ENCODE measurements at regions of chr22 and their contacts with region 1.

Region 1: GRCh38 chr22:41448189-41448808 is 1.7 kb upstream of the TOB2 start:
- DNase-seq: peak; percentile 99
- ATAC-seq: peak; percentile 80
- H3K4me3 ChIP-seq: peak overlapping the region; percentile 93 to 94
- H3K27ac ChIP-seq: peak overlapping the region; percentile 100
- H3K4me1 ChIP-seq: peaks cover 5 to 29% of the 10 kb centered on the region in 2 experiments; a peak in 3 of 4 replicates
- H3K27me3 ChIP-seq: no peaks in the 10 kb centered on the region
- CTCF ChIP-seq: no peak
- POLR2A ChIP-seq: peak; percentile 37
- RAD21 ChIP-seq: no peak

Region 2: DNA sequence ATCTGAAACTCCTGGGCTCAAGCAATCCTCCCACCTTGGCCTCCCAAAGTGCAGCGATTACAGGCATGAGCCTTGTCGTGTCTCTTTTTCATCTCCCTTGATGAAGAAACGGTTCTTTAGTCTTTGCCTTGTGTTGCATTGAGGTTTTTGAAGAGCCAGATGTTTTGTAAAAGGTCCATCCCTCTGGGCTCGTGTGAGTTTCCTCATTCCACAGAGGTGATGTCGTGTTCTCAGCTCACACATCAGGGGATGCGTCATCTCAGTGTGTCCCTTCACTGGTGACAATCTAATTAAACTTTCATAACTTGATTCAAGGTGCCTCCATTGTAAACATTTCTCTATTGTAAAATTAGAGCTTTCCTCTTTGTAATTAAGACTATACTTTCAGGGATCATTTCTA is 96.2 kb before region 1 on chr22:
- CTCF ChIA-PET with region 1: no interaction called
- POLR2A ChIA-PET with region 1: no interaction called
- RAD21 ChIA-PET with region 1: no interaction called
- intact Hi-C with region 1: no loop called
- DNase-seq: peak; percentile 6
- ATAC-seq: peak; percentile 61
- H3K4me3 ChIP-seq: no peak overlapping the region
- H3K27ac ChIP-seq: peak overlapping the region; percentile 19; the same call in 1 of the 2 replicates
- H3K4me1 ChIP-seq: peaks cover 0 to 19% of the 10 kb centered on the region in 2 experiments; a peak in 2 of 4 replicates
- H3K27me3 ChIP-seq: no peaks in the 10 kb centered on the region
- CTCF ChIP-seq: no peak
- POLR2A ChIP-seq: no peak
- RAD21 ChIP-seq: no peak

Region 3: DNA sequence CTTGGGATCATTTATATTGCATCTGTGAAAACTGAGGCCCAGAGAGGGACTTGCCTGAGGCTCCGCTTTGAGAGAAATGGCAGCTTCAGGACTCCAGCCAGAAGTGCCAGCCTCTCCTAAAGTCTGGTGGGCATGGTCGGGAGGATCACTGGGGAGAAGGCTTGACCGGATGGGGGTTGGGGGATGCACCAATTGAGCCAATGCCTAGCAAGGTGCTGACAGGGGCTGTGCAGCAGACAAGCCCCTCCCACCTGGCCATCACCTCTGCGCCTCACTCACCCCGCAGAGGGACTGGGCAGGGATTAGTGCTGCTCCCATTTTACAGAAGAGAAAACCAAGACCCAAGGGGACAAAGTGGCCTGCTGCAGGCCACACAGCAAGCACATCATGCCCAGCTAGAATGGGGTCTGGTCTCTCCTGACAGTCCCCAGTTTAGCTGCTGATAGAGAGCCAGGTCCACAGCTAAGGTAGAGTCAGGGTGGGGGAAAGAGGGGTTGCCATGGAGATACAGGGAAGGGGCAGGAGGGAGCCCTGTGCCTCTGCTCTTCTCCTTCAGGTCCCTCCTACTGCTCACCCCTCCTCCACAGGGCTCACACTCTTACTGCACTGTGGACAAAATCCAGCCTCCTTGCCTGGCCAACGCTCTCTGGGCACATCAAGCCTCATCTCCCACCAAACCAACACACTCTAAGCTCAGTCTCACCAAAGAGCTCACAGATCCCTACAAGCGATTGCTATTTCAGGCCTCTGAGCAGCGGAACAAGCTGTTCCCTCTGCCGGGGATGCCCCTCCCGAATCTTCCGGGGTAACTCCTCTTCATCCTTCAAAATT is 37.1 kb before region 1 on chr22:
- CTCF ChIA-PET with region 1: no interaction called
- POLR2A ChIA-PET with region 1: no interaction called
- RAD21 ChIA-PET with region 1: no interaction called
- intact Hi-C with region 1: no loop called
- DNase-seq: no peak
- ATAC-seq: no peak
- H3K4me3 ChIP-seq: no peak overlapping the region
- H3K27ac ChIP-seq: peak overlapping the region; percentile 8; the same call in 1 of the 2 replicates
- H3K4me1 ChIP-seq: peaks cover 9 to 34% of the 10 kb centered on the region in 2 experiments
- H3K27me3 ChIP-seq: no peaks in the 10 kb centered on the region
- CTCF ChIP-seq: no peak
- POLR2A ChIP-seq: no peak
- RAD21 ChIP-seq: no peak

Region 4: GRCh38 chr22:41468381-41469217 is 20.3 kb after region 1 on chr22 and contains the starts of genes ACO2 and PHF5A:
- CTCF ChIA-PET with region 1: interaction called, 3 read pairs
- POLR2A ChIA-PET with region 1: interaction called, 57 read pairs
- RAD21 ChIA-PET with region 1: no interaction called
- intact Hi-C with region 1: loop called (anchors 1 kb)
- DNase-seq: peak; percentile 97
- ATAC-seq: peak; percentile 92
- H3K4me3 ChIP-seq: peak within 1 kb of the TSS; percentile 83 to 87
- H3K27ac ChIP-seq: peak within 1 kb of the TSS; percentile 85
- H3K4me1 ChIP-seq: peaks cover 14 to 17% of the 10 kb centered on the region in 2 experiments; a peak in 3 of 4 replicates
- H3K27me3 ChIP-seq: no peaks in the 10 kb centered on the region
- CTCF ChIP-seq: no peak
- POLR2A ChIP-seq: peak; percentile 40
- RAD21 ChIP-seq: no peak
- total RNA-seq, gene ACO2: 108 TPM
- total RNA-seq, gene PHF5A: 86.0 TPM

Region 5: GRCh38 chr22:41517172-41518047 is 69.1 kb after region 1 on chr22:
- CTCF ChIA-PET with region 1: interaction called, 5 read pairs
- POLR2A ChIA-PET with region 1: interaction called, 8 read pairs
- RAD21 ChIA-PET with region 1: no interaction called
- intact Hi-C with region 1: loop called (anchors 2 kb)
- DNase-seq: no peak
- ATAC-seq: peak; percentile 53
- H3K4me3 ChIP-seq: peak overlapping the region in 1 of 2 experiments; percentile 8; a peak in 1 of 4 replicates
- H3K27ac ChIP-seq: peak overlapping the region; percentile 53
- H3K4me1 ChIP-seq: peaks cover 19 to 32% of the 10 kb centered on the region in 2 experiments
- H3K27me3 ChIP-seq: no peaks in the 10 kb centered on the region
- CTCF ChIP-seq: peak; percentile 74 to 96 (median 85); a peak in 5 of 6 replicates
- POLR2A ChIP-seq: no peak
- RAD21 ChIP-seq: peak; percentile 96

Region 6: DNA sequence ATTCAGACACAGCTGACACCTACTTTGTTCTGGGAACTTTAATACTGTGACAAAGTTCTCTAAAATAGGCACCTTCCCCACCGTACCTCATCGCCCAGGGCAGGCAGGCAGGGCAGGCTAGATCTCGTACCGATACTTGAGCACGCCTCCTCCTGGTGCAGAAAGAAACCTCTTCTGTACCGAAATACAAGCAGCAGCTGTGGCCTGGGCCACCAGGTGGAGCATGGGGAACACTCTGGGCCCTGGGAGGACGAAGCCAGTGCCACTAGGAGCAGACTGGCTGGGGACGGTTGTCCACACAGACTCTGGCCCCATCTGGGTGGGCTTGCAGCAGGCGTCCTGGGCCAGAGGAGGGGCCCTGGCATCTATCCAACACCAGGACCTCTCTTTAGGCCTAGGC is 128.6 kb after region 1 on chr22:
- CTCF ChIA-PET with region 1: no interaction called
- POLR2A ChIA-PET with region 1: no interaction called
- RAD21 ChIA-PET with region 1: no interaction called
- intact Hi-C with region 1: no loop called
- DNase-seq: peak; percentile 35
- ATAC-seq: peak; percentile 97
- H3K4me3 ChIP-seq: no peak overlapping the region
- H3K27ac ChIP-seq: no peak overlapping the region
- H3K4me1 ChIP-seq: no peaks in the 10 kb centered on the region
- H3K27me3 ChIP-seq: no peaks in the 10 kb centered on the region
- CTCF ChIP-seq: peak; percentile 89 to 98 (median 90)
- POLR2A ChIP-seq: no peak
- RAD21 ChIP-seq: peak; percentile 82

Region 7: GRCh38 chr22:41688365-41689211 is 240.3 kb after region 1 on chr22 and contains the start of gene SNU13:
- CTCF ChIA-PET with region 1: no interaction called
- POLR2A ChIA-PET with region 1: no interaction called
- RAD21 ChIA-PET with region 1: no interaction called
- intact Hi-C with region 1: no loop called
- DNase-seq: peak; percentile 77
- ATAC-seq: peak; percentile 92
- H3K4me3 ChIP-seq: peak within 1 kb of the TSS; percentile 69 to 90
- H3K27ac ChIP-seq: peak within 1 kb of the TSS; percentile 96
- H3K4me1 ChIP-seq: peaks cover 2 to 37% of the 10 kb centered on the region in 2 experiments
- H3K27me3 ChIP-seq: no peaks in the 10 kb centered on the region
- CTCF ChIP-seq: no peak
- POLR2A ChIP-seq: peak; percentile 77
- RAD21 ChIP-seq: no peak
- total RNA-seq, gene SNU13: 283 TPM

Measured in HCT116 (cell line).